ENCODE measurements at regions of chr12 and their contacts with region 1.

Region 1: GRCh38 chr12:4353785-4354208 is 25.7 kb downstream of the FGF23 start:
- DNase-seq: no peak
- H3K4me3 ChIP-seq: no peak overlapping the region
- H3K27ac ChIP-seq: no peak overlapping the region
- H3K4me1 ChIP-seq: no peaks in the 10 kb centered on the region
- H3K27me3 ChIP-seq: no peaks in the 10 kb centered on the region
- CTCF ChIP-seq: peak in 1 of 2 donors; percentile 34
- POLR2A ChIP-seq: no peak

Region 2: GRCh38 chr12:4526923-4527546 is 173.2 kb after region 1 on chr12:
- CTCF ChIA-PET with region 1: no interaction called
- POLR2A ChIA-PET with region 1: no interaction called
- dilution Hi-C with region 1: no loop called
- intact Hi-C with region 1: loop called (anchors 2 kb)
- DNase-seq: peak; percentile 20
- H3K4me3 ChIP-seq: no peak overlapping the region
- H3K27ac ChIP-seq: no peak overlapping the region
- H3K4me1 ChIP-seq: no peaks in the 10 kb centered on the region
- H3K27me3 ChIP-seq: no peaks in the 10 kb centered on the region
- CTCF ChIP-seq: peak in 1 of 2 donors; percentile 20
- POLR2A ChIP-seq: no peak